Psoas muscle (tissue), 8 donors: ENCODE measurements at regions of chr7 and their contacts with region 1.

Region 1: DNA sequence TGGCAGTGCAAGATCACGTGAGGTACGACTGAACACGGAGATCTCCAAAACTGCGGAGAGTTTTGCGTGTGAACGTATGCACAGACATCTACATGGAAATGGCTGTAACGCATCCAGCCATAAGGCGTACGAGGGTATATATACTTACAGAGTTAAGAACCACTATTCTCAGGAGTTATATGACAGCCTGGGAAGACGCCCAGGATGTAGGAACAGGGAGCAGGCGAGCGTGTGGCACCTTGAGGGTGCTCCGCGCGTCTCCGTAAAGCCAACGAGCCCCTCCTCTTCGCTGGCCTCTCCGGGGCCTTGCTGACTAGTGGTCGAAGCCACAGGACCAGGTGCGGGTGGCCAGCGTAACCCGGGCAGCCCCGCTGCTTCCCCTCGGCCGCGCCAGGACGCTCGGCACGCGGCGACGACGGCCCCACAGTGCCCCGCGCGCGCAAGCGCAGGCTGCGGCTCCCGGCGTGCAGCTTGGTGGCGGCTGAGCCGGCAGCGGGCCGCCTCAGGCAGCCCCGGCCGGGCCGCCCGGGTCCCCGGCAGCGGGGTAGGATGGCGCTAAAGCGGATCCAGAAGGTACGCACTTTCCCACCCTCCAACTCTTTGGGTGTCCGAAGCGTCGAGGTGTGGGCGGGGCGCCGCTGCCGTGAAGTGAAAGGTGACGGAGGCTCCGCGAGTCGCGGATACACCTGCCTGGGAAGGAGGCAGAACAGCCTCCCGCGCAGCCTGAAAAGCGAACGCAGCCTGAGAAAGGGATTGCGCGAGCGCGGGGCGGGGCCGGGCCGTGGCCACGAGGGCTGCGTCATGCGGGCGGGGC is at the start of gene UBE2D4:
- DNase-seq: peak; percentile 89 to 94
- ATAC-seq: peak; percentile 94 to 96 (median 95)
- H3K4me3 ChIP-seq: peak within 1 kb of the TSS; percentile 77
- H3K27ac ChIP-seq: peak within 1 kb of the TSS; percentile 93
- H3K4me1 ChIP-seq: peaks cover 16% of the 10 kb centered on the region
- H3K27me3 ChIP-seq: no peaks in the 10 kb centered on the region
- CTCF ChIP-seq: no peak
- total RNA-seq, gene UBE2D4: 54.2 to 78.8 (median 69.1) TPM

Region 2: GRCh38 chr7:43869867-43870240 is 56.3 kb before region 1 on chr7:
- intact Hi-C with region 1: loop called (anchors 2 to 5 kb)
- DNase-seq: peak in 1 of 2 donors; percentile 31
- ATAC-seq: peak; percentile 40 to 63 (median 44)
- H3K4me3 ChIP-seq: peak overlapping the region; percentile 84
- H3K27ac ChIP-seq: peak overlapping the region; percentile 88
- H3K4me1 ChIP-seq: peaks cover 40% of the 10 kb centered on the region
- H3K27me3 ChIP-seq: no peaks in the 10 kb centered on the region
- CTCF ChIP-seq: no peak

Region 3: GRCh38 chr7:44065436-44066118 is 139.4 kb after region 1 on chr7 and contains the start of gene PGAM2:
- intact Hi-C with region 1: no loop called
- DNase-seq: peak; percentile 85 to 96
- ATAC-seq: peak; percentile 81 to 84 (median 84)
- H3K4me3 ChIP-seq: peak within 1 kb of the TSS; percentile 67
- H3K27ac ChIP-seq: peak within 1 kb of the TSS; percentile 85
- H3K4me1 ChIP-seq: peaks cover 72% of the 10 kb centered on the region
- H3K27me3 ChIP-seq: no peaks in the 10 kb centered on the region
- CTCF ChIP-seq: no peak
- total RNA-seq, gene PGAM2: 214 to 449 (median 298) TPM